OCI-LY7 (cell line): ENCODE measurements at regions of chr6 and their contacts with region 1.

Region 1: DNA sequence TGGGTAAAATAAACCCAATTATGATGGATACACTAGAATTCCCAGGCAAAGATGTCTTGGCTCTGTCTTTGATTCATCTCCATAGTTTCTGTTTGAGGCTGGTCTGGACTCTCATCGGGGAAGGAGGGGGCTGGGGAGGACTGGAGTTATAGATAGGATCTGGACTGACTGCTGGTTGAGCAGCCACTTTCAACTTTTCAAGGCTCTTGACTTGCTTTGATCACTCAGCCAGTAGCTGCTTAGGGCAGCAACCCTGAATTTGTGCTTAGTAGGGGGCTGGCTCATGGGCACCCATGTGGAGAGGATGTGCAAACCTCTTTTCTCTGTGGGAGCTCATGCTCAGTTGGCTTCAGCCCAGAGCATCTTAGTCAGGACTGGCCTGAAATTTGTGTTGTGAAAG is 114.0 kb upstream of the NEDD9 start:
- DNase-seq: peak; percentile 72
- H3K4me3 ChIP-seq: peak overlapping the region; percentile 34
- H3K27ac ChIP-seq: no peak overlapping the region
- H3K4me1 ChIP-seq: peaks cover 23% of the 10 kb centered on the region
- CTCF ChIP-seq: no peak

Region 2: GRCh38 chr6:10946706-10947105 is 399.8 kb before region 1 on chr6:
- CTCF ChIA-PET with region 1: no interaction called
- POLR2A ChIA-PET with region 1: no interaction called
- intact Hi-C with region 1: no loop called
- DNase-seq: no peak
- H3K4me3 ChIP-seq: no peak overlapping the region
- H3K27ac ChIP-seq: no peak overlapping the region
- H3K4me1 ChIP-seq: no peaks in the 10 kb centered on the region
- CTCF ChIP-seq: no peak

Region 3: GRCh38 chr6:11172501-11173332 is 173.8 kb before region 1 on chr6:
- CTCF ChIA-PET with region 1: no interaction called
- POLR2A ChIA-PET with region 1: no interaction called
- intact Hi-C with region 1: loop called (anchors 10 kb)
- DNase-seq: peak; percentile 66
- H3K4me3 ChIP-seq: no peak overlapping the region
- H3K27ac ChIP-seq: no peak overlapping the region
- H3K4me1 ChIP-seq: no peaks in the 10 kb centered on the region
- CTCF ChIP-seq: peak; percentile 94